Dorsolateral prefrontal cortex (tissue), 120 donors: ENCODE measurements at regions of chr22 and their contacts with region 1.

Region 1: DNA sequence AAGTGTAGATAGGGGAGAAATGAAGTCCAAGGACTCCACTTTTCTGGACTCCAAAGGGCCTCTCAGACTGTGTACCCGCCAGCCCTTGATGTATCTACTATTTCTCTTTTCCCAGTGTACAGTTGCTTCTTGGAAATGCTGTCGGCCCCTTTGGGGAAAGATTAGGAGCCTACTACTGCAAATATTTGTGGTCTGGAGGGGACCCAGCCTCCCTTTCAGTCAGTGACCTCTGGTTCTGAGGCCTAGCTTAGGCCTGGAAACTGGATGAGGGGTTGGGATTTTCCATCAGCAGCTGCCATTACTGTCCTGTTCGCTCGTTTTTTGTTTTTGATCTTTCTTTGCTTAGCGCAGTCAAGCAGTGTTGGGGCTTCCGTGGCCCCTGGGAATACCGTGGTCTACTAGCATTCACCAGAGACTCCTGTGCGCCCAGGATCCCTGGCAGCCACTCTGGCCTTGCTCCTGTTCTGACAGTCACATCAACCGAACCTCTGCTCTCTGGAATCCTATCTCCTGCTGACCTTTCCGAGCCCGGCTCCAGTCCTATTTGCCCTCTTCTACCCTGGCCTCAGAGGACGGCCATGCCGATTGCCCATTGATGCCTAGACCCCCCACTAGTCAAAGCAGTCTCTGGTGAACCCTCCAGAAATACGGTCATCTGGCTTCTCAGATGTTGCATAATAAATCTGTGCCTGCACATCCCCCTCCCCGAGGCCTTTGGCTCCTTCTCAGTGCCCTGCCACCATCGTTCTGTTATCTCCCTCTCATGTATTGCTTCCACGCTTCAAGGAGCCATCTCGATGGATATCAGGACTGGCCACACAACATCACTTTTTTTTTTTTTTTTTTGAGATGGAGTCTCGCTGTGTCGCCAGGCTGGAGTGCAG is 1.3 kb upstream of the RRP7A start:
- DNase-seq: no peak
- H3K4me3 ChIP-seq: no peak overlapping the region
- H3K27ac ChIP-seq: peak overlapping the region in 2 of 59 donors; percentile 9 to 76
- H3K27me3 ChIP-seq: no peaks in the 10 kb centered on the region
- CTCF ChIP-seq: no peak

Region 2: GRCh38 chr22:42343551-42344081 is 177.3 kb before region 1 on chr22:
- intact Hi-C with region 1: no loop called
- DNase-seq: no peak
- H3K4me3 ChIP-seq: peak overlapping the region in 49 of 59 donors; percentile 25 to 75 (median 66)
- H3K27ac ChIP-seq: peak overlapping the region in 53 of 59 donors; percentile 58 to 100 (median 97)
- H3K27me3 ChIP-seq: no peaks in the 10 kb centered on the region
- CTCF ChIP-seq: no peak

Region 3: DNA sequence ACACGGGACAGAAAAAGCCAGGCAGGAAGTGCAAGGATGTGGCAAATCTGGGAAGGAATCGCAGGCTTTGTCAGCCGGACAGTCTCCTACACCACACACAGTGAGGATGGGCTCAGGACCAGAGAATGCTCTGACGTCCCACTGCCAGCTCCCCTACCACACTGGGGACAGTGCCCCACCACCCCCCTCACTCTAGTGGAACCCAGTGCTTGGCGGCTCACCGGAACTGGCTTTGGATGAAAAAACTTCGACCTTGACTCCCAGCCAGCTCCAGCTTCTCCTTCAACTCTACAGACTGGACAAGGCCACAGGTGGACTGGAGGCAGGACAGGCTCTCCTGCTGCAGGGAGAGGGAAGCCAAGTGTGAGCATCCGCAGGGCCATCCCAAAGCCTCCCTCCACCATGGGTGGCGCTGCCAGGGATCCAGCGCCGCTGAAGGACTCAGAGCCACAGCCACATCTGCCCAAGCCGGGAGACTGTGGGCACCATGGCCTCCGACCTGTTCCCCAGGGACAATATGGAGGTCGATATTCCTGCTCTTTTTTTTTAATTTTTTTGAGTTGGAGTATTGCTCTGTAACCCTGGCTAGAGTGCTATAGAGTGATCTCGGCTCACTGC is 56.8 kb after region 1 on chr22:
- intact Hi-C with region 1: loop called in 1 of 2 experiments (anchors 5 kb)
- DNase-seq: no peak
- H3K4me3 ChIP-seq: no peak overlapping the region
- H3K27ac ChIP-seq: no peak overlapping the region
- H3K27me3 ChIP-seq: no peaks in the 10 kb centered on the region
- CTCF ChIP-seq: no peak